Adrenal gland (tissue), 19 donors: ENCODE measurements at regions of chr2 and their contacts with region 1.

Region 1: GRCh38 chr2:199704358-199705238 is 146.4 kb downstream of the FTCDNL1 start:
- DNase-seq: peak; percentile 22 to 67 (median 36)
- H3K4me3 ChIP-seq: no peak overlapping the region
- H3K27ac ChIP-seq: no peak overlapping the region
- H3K4me1 ChIP-seq: no peaks in the 10 kb centered on the region
- H3K27me3 ChIP-seq: no peaks in the 10 kb centered on the region
- CTCF ChIP-seq: peak; percentile 43 to 74 (median 65)
- POLR2A ChIP-seq: no peak

Region 2: GRCh38 chr2:199861132-199861774 is 156.7 kb after region 1 on chr2:
- intact Hi-C with region 1: loop called in 1 of 2 experiments (anchors 2 kb)
- DNase-seq: no peak
- H3K4me3 ChIP-seq: no peak overlapping the region
- H3K27ac ChIP-seq: no peak overlapping the region
- H3K4me1 ChIP-seq: no peaks in the 10 kb centered on the region
- H3K27me3 ChIP-seq: no peaks in the 10 kb centered on the region
- CTCF ChIP-seq: peak; percentile 47 to 72 (median 62)
- POLR2A ChIP-seq: no peak

Region 3: DNA sequence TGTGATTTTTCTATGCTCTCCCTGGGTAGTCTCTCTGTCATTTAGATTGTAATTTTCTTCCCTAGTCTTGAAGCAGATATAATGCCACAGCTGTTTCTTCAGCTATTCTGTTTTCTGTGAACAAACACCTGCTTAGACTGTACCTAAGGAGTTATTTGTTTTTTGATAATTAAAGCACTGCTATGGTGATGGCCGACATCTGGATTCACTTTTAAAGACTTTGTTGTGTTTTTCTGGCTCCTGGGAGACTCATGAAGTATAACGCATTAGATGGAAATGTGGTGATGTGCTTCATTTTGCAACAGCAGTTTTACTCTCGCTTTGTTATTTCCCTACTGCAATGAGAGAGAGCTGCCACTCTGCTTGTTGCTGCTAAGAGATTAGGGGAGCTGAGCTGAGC is 190.8 kb after region 1 on chr2:
- intact Hi-C with region 1: no loop called
- DNase-seq: no peak
- H3K4me3 ChIP-seq: no peak overlapping the region
- H3K27ac ChIP-seq: no peak overlapping the region
- H3K4me1 ChIP-seq: peaks cover 8 to 11% of the 10 kb centered on the region in 2 donors
- H3K27me3 ChIP-seq: no peaks in the 10 kb centered on the region
- CTCF ChIP-seq: no peak
- POLR2A ChIP-seq: no peak

Region 4: DNA sequence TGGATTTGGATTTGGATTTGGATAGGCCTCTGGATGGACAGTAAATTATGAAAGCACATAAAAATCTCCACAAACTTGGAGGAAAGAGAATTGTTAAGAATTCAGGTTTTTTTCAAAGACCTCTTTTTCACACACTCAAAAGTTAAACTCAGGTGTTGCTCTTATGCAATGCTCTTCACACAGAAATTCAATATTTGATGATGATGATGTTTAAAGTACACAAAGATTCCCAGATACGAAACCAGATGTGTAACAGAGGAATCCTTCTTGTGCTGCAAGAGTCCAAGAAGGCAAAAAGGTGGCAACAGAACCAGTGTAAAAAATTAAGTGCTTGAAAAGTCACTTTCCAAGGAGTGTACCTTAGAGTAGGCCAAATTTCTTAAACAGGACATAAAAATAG is 526.1 kb after region 1 on chr2:
- intact Hi-C with region 1: no loop called
- DNase-seq: no peak
- H3K4me3 ChIP-seq: no peak overlapping the region
- H3K27ac ChIP-seq: no peak overlapping the region
- H3K4me1 ChIP-seq: peaks cover 0 to 3% of the 10 kb centered on the region in 2 donors
- H3K27me3 ChIP-seq: no peaks in the 10 kb centered on the region
- CTCF ChIP-seq: no peak
- POLR2A ChIP-seq: no peak